ENCODE measurements at regions of chr7 and their contacts with region 1.

Region 1: GRCh38 chr7:94276795-94277194 is 117.9 kb upstream of the COL1A2 start:
- DNase-seq: no peak
- ATAC-seq: peak; percentile 86
- H3K4me3 ChIP-seq: no peak overlapping the region
- H3K27ac ChIP-seq: no peak overlapping the region
- H3K4me1 ChIP-seq: no peaks in the 10 kb centered on the region
- H3K27me3 ChIP-seq: no peaks in the 10 kb centered on the region
- CTCF ChIP-seq: peak; percentile 32 to 63 (median 43); a peak in 5 of 6 replicates
- EP300 ChIP-seq: no peak
- POLR2A ChIP-seq: no peak
- RAD21 ChIP-seq: peak; percentile 64

Region 2: GRCh38 chr7:93799750-93800357 is 476.9 kb before region 1 on chr7:
- CTCF ChIA-PET with region 1: interaction called, 4 read pairs
- POLR2A ChIA-PET with region 1: no interaction called
- RAD21 ChIA-PET with region 1: interaction called, 4 read pairs
- SMC1A ChIA-PET with region 1: no interaction called
- in situ Hi-C with region 1: no loop called
- intact Hi-C with region 1: loop called (anchors 5 kb)
- DNase-seq: no peak
- ATAC-seq: peak; percentile 54
- H3K4me3 ChIP-seq: no peak overlapping the region
- H3K27ac ChIP-seq: no peak overlapping the region
- H3K4me1 ChIP-seq: no peaks in the 10 kb centered on the region
- H3K27me3 ChIP-seq: no peaks in the 10 kb centered on the region
- CTCF ChIP-seq: peak; percentile 36 to 51 (median 41); a peak in 4 of 6 replicates
- EP300 ChIP-seq: no peak
- POLR2A ChIP-seq: no peak
- RAD21 ChIP-seq: peak; percentile 56

Region 3: DNA sequence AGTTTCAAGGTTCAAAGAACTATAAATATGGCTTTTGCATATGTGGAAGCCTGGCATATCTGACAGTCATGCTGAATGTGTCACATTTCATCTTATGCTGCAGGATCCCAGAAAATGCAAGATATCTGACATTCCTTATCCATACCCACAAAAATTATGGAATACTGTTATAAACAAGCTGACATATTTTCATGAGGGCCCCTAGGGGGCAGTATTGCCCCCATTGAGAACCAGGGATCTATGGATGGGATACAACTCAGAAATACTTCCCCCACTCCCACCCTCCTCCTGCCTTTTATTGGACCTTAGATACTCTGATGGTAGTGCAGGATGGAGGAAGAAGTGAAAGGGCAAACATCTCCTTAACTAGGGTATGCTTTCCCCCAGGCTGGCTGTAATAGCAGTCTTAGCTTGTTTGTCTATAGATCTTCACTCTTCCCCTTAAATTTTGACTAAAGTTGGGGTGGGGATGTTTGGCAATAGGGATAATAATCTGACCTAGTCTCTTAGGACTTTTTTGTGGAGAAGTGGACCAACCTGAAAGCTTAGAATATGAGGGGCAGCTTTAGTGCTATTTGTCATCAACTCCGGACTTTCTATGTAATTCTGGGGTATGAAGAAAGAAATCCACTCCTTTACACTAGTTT is 373.9 kb before region 1 on chr7:
- CTCF ChIA-PET with region 1: interaction called, 8 read pairs
- POLR2A ChIA-PET with region 1: no interaction called
- RAD21 ChIA-PET with region 1: no interaction called
- SMC1A ChIA-PET with region 1: interaction called, 9 read pairs
- in situ Hi-C with region 1: no loop called
- intact Hi-C with region 1: loop called (anchors 5 kb)
- DNase-seq: no peak
- ATAC-seq: peak; percentile 56
- H3K4me3 ChIP-seq: no peak overlapping the region
- H3K27ac ChIP-seq: no peak overlapping the region
- H3K4me1 ChIP-seq: no peaks in the 10 kb centered on the region
- H3K27me3 ChIP-seq: no peaks in the 10 kb centered on the region
- CTCF ChIP-seq: peak; percentile 66 to 72 (median 69)
- EP300 ChIP-seq: no peak
- POLR2A ChIP-seq: no peak
- RAD21 ChIP-seq: peak; percentile 86

Region 4: GRCh38 chr7:94160719-94161435 is 115.9 kb before region 1 on chr7:
- CTCF ChIA-PET with region 1: interaction called, 14 read pairs
- POLR2A ChIA-PET with region 1: no interaction called
- RAD21 ChIA-PET with region 1: no interaction called
- SMC1A ChIA-PET with region 1: interaction called, 9 read pairs
- in situ Hi-C with region 1: no loop called
- intact Hi-C with region 1: no loop called
- DNase-seq: peak; percentile 83
- ATAC-seq: peak; percentile 97
- H3K4me3 ChIP-seq: peak overlapping the region; percentile 25; the same call in 1 of the 2 replicates
- H3K27ac ChIP-seq: peak overlapping the region; percentile 37
- H3K4me1 ChIP-seq: peaks cover 6% of the 10 kb centered on the region
- H3K27me3 ChIP-seq: no peaks in the 10 kb centered on the region
- CTCF ChIP-seq: no peak
- EP300 ChIP-seq: peak; percentile 98 to 99
- POLR2A ChIP-seq: no peak
- RAD21 ChIP-seq: no peak